ENCODE measurements at regions of chr1 and their contacts with region 1.

Region 1: GRCh38 chr1:165392634-165393571 is 36.4 kb upstream of the LMX1A start:
- DNase-seq: peak; percentile 85
- H3K4me3 ChIP-seq: peak overlapping the region; percentile 22
- H3K27ac ChIP-seq: no peak overlapping the region
- H3K4me1 ChIP-seq: no peaks in the 10 kb centered on the region
- H3K27me3 ChIP-seq: peaks cover 8% of the 10 kb centered on the region
- CTCF ChIP-seq: peak; percentile 95

Region 2: GRCh38 chr1:165207853-165208515 is 184.9 kb before region 1 on chr1:
- CTCF ChIA-PET with region 1: no interaction called
- POLR2A ChIA-PET with region 1: no interaction called
- intact Hi-C with region 1: no loop called
- DNase-seq: peak; percentile 14
- H3K4me3 ChIP-seq: no peak overlapping the region
- H3K27ac ChIP-seq: no peak overlapping the region
- H3K4me1 ChIP-seq: no peaks in the 10 kb centered on the region
- H3K27me3 ChIP-seq: no peaks in the 10 kb centered on the region
- CTCF ChIP-seq: no peak

Region 3: DNA sequence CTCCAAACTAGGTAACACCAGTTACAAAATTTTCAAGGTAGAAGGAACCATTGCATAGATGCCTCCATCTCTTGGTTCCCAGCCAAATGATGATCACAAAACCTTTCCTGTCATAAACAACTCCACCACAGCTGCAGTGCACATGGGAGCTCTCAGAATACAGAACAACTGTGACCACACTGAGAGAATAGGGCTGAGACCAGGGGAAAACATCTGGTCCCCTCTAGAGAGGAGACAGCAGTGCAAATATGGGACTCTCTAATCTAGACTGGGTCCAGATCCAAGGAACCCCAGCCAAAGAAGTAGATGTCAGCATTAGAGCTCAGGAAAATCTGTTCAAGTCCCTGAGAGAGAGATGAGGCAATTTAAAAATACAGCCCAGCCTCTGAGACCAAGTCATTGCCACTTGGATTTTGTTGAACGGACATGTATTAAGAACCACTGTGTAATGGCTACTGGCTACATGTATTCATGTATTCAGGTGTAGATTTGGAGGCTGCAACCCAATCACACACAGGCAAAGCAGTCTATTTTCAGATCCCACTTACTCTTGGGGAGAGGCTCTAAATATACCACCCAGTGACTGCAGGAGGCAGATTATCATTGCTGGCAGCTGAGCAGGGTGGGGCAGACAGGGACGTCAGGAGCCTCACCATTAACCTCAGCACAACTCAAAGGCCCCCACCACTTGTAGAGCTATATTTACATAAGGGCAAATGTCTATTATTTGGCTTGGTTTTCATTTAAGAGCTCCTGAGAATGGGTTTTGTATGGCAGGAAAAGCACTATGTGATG is 59.6 kb after region 1 on chr1:
- CTCF ChIA-PET with region 1: no interaction called
- POLR2A ChIA-PET with region 1: no interaction called
- intact Hi-C with region 1: no loop called
- DNase-seq: no peak
- H3K4me3 ChIP-seq: no peak overlapping the region
- H3K27ac ChIP-seq: no peak overlapping the region
- H3K4me1 ChIP-seq: no peaks in the 10 kb centered on the region
- H3K27me3 ChIP-seq: peaks cover 12% of the 10 kb centered on the region
- CTCF ChIP-seq: no peak

Region 4: DNA sequence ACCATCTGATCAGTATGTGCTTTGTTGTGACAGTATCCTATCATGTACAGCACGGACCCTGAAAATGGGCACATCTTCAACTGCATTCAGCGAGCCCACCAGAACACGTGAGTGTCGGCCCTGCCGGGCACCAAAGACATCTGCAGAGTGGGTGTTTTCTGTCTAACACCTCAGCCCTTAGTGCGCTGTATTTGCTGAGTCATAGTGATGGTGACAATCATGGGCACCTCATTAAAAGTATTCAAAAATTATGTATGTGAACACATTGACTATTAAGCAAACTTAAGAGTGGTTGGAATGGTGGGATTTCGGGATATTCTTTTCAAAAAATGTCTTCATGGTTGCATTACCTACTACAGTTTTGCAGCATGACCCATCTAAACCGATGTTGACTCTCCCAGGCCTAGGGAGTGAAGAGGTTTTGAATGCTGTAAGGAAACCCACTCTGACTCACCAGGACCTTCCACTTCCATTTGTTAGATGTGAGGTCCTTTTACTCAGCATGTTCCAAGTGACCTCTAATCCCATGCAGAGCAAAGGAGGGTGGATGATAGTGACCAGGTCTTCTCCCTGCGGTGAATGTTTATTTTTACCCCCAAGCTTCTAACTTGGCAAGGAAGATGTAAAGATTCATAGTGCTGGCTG is 258.2 kb after region 1 on chr1:
- CTCF ChIA-PET with region 1: no interaction called
- POLR2A ChIA-PET with region 1: interaction called, 13 read pairs
- intact Hi-C with region 1: no loop called
- DNase-seq: no peak
- H3K4me3 ChIP-seq: no peak overlapping the region
- H3K27ac ChIP-seq: peak overlapping the region; percentile 2
- H3K4me1 ChIP-seq: peaks cover 2% of the 10 kb centered on the region
- H3K27me3 ChIP-seq: no peaks in the 10 kb centered on the region
- CTCF ChIP-seq: no peak

Region 5: GRCh38 chr1:165914136-165914798 is 521.4 kb after region 1 on chr1:
- CTCF ChIA-PET with region 1: no interaction called
- POLR2A ChIA-PET with region 1: no interaction called
- intact Hi-C with region 1: loop called (anchors 5 kb)
- DNase-seq: peak; percentile 79
- H3K4me3 ChIP-seq: no peak overlapping the region
- H3K27ac ChIP-seq: no peak overlapping the region
- H3K4me1 ChIP-seq: no peaks in the 10 kb centered on the region
- H3K27me3 ChIP-seq: no peaks in the 10 kb centered on the region
- CTCF ChIP-seq: peak; percentile 90

Measured in A673 (cell line).